BJ (cell line): ENCODE measurements at regions of chr2 and their contacts with region 1.

Region 1: DNA sequence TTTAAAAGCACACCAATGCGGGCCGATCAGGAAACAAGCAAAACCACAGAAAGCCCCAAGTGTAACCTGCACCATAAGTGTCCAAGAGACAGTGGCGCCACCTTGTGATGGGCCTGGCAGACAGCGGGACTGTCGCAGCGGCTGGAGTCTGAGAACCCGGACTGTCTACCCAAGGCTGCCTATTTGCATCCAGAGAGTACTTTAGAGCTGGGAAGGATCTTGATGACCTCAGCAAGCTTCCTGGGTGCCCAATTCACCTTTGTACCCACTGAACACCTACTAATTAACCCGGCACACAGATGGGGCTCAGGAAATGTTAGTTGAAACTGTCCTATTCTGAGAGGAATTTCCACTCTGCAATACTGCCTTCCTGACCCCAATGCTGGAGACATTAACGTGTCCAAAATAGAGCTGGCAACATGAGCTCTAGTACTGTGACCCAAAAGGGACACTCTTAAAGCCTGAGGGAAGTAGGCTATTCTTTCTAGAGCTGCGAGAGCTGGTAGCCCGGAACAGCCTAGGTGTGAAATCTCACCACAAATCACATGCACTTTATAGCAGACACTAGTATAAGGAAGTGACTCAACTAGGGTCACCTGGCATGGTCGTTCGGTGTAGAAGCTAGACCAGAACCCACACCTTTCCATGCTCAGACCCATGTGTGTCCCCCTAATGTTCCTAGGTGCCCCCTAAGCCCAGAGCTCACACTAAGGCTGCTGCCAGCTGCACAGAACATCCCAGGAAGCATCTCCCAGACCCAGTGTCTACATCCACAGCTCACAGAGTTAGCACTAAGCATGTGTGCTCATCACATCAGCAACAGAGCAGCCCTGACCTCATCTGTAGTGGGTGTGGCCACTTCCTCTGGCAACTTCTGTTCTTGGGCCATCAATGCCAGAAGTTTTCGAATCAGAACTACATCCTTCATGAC is 25.4 kb downstream of the POLR1A start:
- DNase-seq: no peak
- H3K4me3 ChIP-seq: no peak overlapping the region
- H3K27me3 ChIP-seq: no peaks in the 10 kb centered on the region
- CTCF ChIP-seq: peak; percentile 91

Region 2: DNA sequence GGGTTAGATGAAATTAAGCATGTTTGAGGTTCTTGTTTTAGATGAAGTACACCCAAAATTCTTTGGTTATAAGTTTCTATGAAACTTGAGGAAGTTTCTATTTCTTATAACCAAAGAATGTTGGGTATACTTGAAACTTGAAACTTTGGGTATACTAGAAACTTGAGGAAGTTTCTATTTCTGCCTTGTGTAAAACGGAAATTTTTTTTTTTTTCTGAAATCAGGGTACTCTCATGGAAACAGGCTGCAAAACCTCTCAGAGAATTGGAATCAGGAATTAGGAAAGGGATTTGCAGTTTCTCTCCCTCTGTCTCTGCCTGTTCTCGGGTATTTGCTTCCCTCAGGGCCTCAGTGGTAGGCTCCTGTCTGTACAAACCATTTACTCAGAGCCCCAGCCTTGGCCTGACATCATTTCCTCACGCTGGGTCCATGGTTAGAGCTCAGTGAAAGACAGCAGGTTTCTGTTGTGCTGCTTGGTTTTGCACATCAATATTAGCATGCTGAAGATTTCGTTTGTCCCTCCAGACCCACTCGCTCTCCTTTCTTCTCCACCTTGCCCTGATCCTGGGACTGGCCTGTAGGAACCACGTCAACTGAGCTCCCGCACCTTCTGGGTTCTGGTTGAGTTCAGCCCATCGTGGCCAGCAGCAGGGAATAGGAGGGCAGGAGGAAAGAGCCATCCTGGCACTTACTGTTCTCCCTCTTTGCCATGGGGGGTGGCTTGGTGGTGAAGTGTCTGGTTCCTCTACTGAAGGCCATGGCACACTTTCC is 81.0 kb before region 1 on chr2:
- CTCF ChIA-PET with region 1: interaction called, 26 read pairs
- POLR2A ChIA-PET with region 1: no interaction called
- DNase-seq: no peak
- H3K4me3 ChIP-seq: no peak overlapping the region
- H3K27me3 ChIP-seq: no peaks in the 10 kb centered on the region
- CTCF ChIP-seq: no peak

Region 3: GRCh38 chr2:86035883-86036668 is 44.2 kb before region 1 on chr2:
- CTCF ChIA-PET with region 1: interaction called, 32 read pairs
- POLR2A ChIA-PET with region 1: no interaction called
- DNase-seq: peak; percentile 53
- H3K4me3 ChIP-seq: no peak overlapping the region
- H3K27me3 ChIP-seq: no peaks in the 10 kb centered on the region
- CTCF ChIP-seq: peak; percentile 53